ENCODE measurements at regions of chr6 and their contacts with region 1.

Region 1: GRCh38 chr6:17706580-17707370 is at the start of gene NUP153:
- DNase-seq: peak; percentile 97 to 99
- ATAC-seq: peak; percentile 82 to 86
- H3K4me3 ChIP-seq: peak within 1 kb of the TSS; percentile 66 to 96 (median 92)
- H3K27ac ChIP-seq: peak within 1 kb of the TSS; percentile 96 to 100 (median 99)
- H3K4me1 ChIP-seq: peaks cover 29 to 30% of the 10 kb centered on the region in 2 donors
- H3K27me3 ChIP-seq: no peaks in the 10 kb centered on the region
- CTCF ChIP-seq: peak in 2 of 5 experiments; percentile 27 to 30
- POLR2A ChIP-seq: peak; percentile 93 to 96
- total RNA-seq, gene NUP153: 29.7 to 44.2 (median 37.9) TPM

Region 2: GRCh38 chr6:17556014-17556413 is 150.8 kb before region 1 on chr6:
- in situ Hi-C with region 1: no loop called
- intact Hi-C with region 1: no loop called
- DNase-seq: no peak
- ATAC-seq: no peak
- H3K4me3 ChIP-seq: no peak overlapping the region
- H3K27ac ChIP-seq: no peak overlapping the region
- H3K4me1 ChIP-seq: no peaks in the 10 kb centered on the region
- H3K27me3 ChIP-seq: no peaks in the 10 kb centered on the region
- CTCF ChIP-seq: no peak
- POLR2A ChIP-seq: no peak

Region 3: GRCh38 chr6:17599885-17600526 is 106.8 kb before region 1 on chr6 and contains the start of gene FAM8A1:
- in situ Hi-C with region 1: no loop called
- intact Hi-C with region 1: loop called (anchors 1 kb)
- DNase-seq: peak; percentile 95 to 97
- ATAC-seq: peak; percentile 93 to 96
- H3K4me3 ChIP-seq: peak within 1 kb of the TSS; percentile 77 to 98 (median 86)
- H3K27ac ChIP-seq: peak within 1 kb of the TSS; percentile 89 to 99 (median 94)
- H3K4me1 ChIP-seq: peaks cover 11 to 13% of the 10 kb centered on the region in 2 donors
- H3K27me3 ChIP-seq: no peaks in the 10 kb centered on the region
- CTCF ChIP-seq: peak; percentile 60 to 75 (median 69)
- POLR2A ChIP-seq: peak; percentile 84 to 85
- total RNA-seq, gene FAM8A1: 22.7 to 37.3 (median 27.5) TPM

Region 4: GRCh38 chr6:17688481-17688880 is 18.3 kb before region 1 on chr6:
- in situ Hi-C with region 1: no loop called
- intact Hi-C with region 1: no loop called
- DNase-seq: no peak
- ATAC-seq: no peak
- H3K4me3 ChIP-seq: no peak overlapping the region
- H3K27ac ChIP-seq: no peak overlapping the region
- H3K4me1 ChIP-seq: peaks cover 2 to 4% of the 10 kb centered on the region in 2 donors
- H3K27me3 ChIP-seq: no peaks in the 10 kb centered on the region
- CTCF ChIP-seq: no peak
- POLR2A ChIP-seq: no peak

Region 5: GRCh38 chr6:17907406-17908229 is 200.8 kb after region 1 on chr6:
- in situ Hi-C with region 1: no loop called
- intact Hi-C with region 1: loop called (anchors 2 kb)
- DNase-seq: peak; percentile 94 to 96
- ATAC-seq: peak; percentile 93
- H3K4me3 ChIP-seq: peak overlapping the region in 1 of 4 donors; percentile 23
- H3K27ac ChIP-seq: peak overlapping the region; percentile 88 to 94 (median 89)
- H3K4me1 ChIP-seq: peaks cover 85 to 87% of the 10 kb centered on the region in 2 donors
- H3K27me3 ChIP-seq: no peaks in the 10 kb centered on the region
- CTCF ChIP-seq: peak in 1 of 5 experiments; percentile 19
- POLR2A ChIP-seq: peak in 1 of 2 donors; percentile 44

Region 6: DNA sequence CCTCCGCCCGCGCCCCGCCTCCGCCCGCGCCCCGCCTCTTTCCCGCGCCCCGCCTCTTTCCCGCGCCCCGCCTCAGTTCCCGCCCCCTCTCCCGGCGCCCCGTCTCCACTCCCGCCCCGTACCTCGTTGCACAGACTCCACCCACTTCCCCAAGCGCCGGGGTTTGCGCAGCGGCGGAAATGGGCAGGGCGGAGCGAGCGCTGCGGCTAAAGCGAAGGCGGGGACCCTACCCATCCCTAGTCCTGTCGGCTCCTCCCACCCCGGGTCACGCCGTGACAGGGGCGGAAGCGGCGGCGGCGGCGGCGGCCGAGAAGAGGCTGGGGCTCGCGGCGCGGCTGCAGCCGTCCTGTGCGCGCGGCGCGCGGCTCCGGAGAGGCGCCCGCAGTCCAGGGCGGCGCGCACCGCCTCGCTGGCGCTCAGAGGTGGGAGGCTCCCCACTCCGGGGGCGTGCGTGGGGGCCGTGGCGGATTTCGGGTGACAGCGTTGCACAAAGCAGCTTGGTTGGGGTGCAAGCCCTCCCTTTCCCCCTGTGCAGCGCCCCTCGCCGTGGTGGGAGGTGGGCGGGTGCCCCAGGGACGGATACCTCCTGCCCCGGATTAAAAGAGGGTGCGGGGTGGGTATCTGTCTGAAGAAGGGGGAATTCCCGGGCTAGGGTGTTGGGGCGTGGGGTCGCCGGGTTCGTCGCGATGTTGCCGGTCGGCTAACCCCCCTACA is 448.5 kb after region 1 on chr6 and contains the start of gene KDM1B:
- in situ Hi-C with region 1: no loop called
- intact Hi-C with region 1: loop called (anchors 1 kb)
- DNase-seq: peak; percentile 98 to 99
- ATAC-seq: peak; percentile 87 to 93
- H3K4me3 ChIP-seq: peak within 1 kb of the TSS; percentile 84 to 95 (median 86)
- H3K27ac ChIP-seq: peak within 1 kb of the TSS; percentile 82 to 94 (median 92)
- H3K4me1 ChIP-seq: peaks cover 14 to 19% of the 10 kb centered on the region in 2 donors
- H3K27me3 ChIP-seq: no peaks in the 10 kb centered on the region
- CTCF ChIP-seq: no peak
- POLR2A ChIP-seq: peak; percentile 91 to 94
- total RNA-seq, gene KDM1B: 14.5 to 29.9 (median 26.0) TPM

Region 7: DNA sequence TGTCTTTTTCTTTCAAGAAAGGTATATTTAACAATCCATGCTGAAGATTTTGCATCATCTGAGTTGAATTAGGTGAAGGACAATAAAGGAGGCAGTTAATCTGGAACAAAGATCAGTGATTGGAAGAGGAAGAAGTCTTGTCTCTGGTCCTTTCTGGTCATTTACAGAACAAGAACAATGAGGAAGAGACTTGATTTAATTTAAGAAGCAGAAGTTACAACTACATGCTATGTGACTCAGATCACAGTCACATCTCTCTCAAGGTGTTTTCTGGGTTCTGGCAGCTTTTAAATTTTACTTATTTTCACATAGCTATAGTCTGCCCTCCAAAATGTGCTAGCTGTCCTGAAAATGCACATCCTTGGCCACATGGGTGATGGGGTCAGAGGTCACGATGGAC is 611.1 kb after region 1 on chr6:
- in situ Hi-C with region 1: no loop called
- intact Hi-C with region 1: no loop called
- DNase-seq: no peak
- ATAC-seq: no peak
- H3K4me3 ChIP-seq: no peak overlapping the region
- H3K27ac ChIP-seq: no peak overlapping the region
- H3K4me1 ChIP-seq: no peaks in the 10 kb centered on the region
- H3K27me3 ChIP-seq: no peaks in the 10 kb centered on the region
- CTCF ChIP-seq: no peak
- POLR2A ChIP-seq: no peak

Region 8: GRCh38 chr6:18432180-18432579 is 725.4 kb after region 1 on chr6:
- in situ Hi-C with region 1: no loop called
- intact Hi-C with region 1: no loop called
- DNase-seq: peak; percentile 34 to 55
- ATAC-seq: peak; percentile 91 to 92
- H3K4me3 ChIP-seq: no peak overlapping the region
- H3K27ac ChIP-seq: peak overlapping the region; percentile 84 to 91 (median 88)
- H3K4me1 ChIP-seq: peaks cover 58 to 69% of the 10 kb centered on the region in 2 donors
- H3K27me3 ChIP-seq: no peaks in the 10 kb centered on the region
- CTCF ChIP-seq: no peak
- POLR2A ChIP-seq: no peak

Measured in gastrocnemius medialis (tissue), 4 donors.